ENCODE measurements at regions of chr1 and their contacts with region 1.

Region 1: GRCh38 chr1:28329395-28330153 is 734 bp downstream of the MED18 start:
- DNase-seq: peak; percentile 54
- H3K4me3 Mint-ChIP-seq: peak overlapping the region; percentile 94
- H3K27ac Mint-ChIP-seq: peak overlapping the region; percentile 98
- H3K4me1 Mint-ChIP-seq: peaks cover 38% of the 10 kb centered on the region
- H3K27me3 Mint-ChIP-seq: no peaks in the 10 kb centered on the region

Region 2: GRCh38 chr1:28199328-28200233 is 130.0 kb before region 1 on chr1:
- CTCF ChIA-PET with region 1: no interaction called
- intact Hi-C with region 1: loop called (anchors 1 kb)
- DNase-seq: peak; percentile 75
- H3K4me3 Mint-ChIP-seq: peak overlapping the region; percentile 31
- H3K27ac Mint-ChIP-seq: peak overlapping the region; percentile 90
- H3K4me1 Mint-ChIP-seq: peaks cover 42% of the 10 kb centered on the region
- H3K27me3 Mint-ChIP-seq: no peaks in the 10 kb centered on the region

Region 3: DNA sequence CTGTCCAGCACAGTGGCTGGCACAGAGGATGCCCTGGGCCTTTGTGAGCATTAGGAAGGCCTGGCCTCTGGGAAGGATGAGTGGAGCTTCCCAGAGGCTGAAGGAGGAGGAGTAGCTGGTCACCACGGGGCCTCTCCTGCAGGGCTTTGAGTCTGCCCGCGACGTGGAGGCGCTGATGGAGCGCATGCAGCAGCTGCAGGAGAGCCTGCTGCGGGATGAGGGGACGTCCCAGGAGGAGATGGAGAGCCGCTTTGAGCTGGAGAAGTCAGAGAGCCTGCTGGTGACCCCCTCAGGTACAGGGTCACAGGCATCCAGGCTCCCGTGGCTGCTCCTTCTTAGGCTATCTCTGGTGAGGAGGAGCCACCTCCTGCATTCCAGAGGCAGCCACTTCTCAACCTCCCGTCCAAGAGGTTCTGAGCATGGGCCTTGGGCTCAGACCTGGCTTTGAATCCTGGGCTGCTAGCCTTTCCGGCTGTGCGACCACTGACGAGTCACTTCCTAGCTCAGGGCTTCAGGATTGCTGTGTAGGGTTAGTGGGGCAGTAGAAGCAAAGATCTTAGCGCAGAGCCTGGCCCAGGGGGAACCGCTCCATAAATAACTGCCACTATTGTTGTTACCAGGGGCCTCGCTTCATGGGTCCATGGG is 56.2 kb before region 1 on chr1:
- CTCF ChIA-PET with region 1: no interaction called
- intact Hi-C with region 1: no loop called
- DNase-seq: no peak
- H3K4me3 Mint-ChIP-seq: no peak overlapping the region
- H3K27ac Mint-ChIP-seq: no peak overlapping the region
- H3K4me1 Mint-ChIP-seq: no peaks in the 10 kb centered on the region
- H3K27me3 Mint-ChIP-seq: no peaks in the 10 kb centered on the region

Region 4: GRCh38 chr1:28359592-28360239 is 30.1 kb after region 1 on chr1:
- CTCF ChIA-PET with region 1: interaction called, 10 read pairs
- intact Hi-C with region 1: no loop called
- DNase-seq: peak; percentile 90
- H3K4me3 Mint-ChIP-seq: no peak overlapping the region
- H3K27ac Mint-ChIP-seq: no peak overlapping the region
- H3K4me1 Mint-ChIP-seq: peaks cover 2% of the 10 kb centered on the region
- H3K27me3 Mint-ChIP-seq: no peaks in the 10 kb centered on the region

Region 5: GRCh38 chr1:28552758-28553663 is 223.4 kb after region 1 on chr1 and contains the start of gene TRNAU1AP:
- CTCF ChIA-PET with region 1: no interaction called
- intact Hi-C with region 1: loop called (anchors 1 kb)
- DNase-seq: peak; percentile 99
- H3K4me3 Mint-ChIP-seq: peak within 1 kb of the TSS; percentile 94
- H3K27ac Mint-ChIP-seq: peak within 1 kb of the TSS; percentile 97
- H3K4me1 Mint-ChIP-seq: peaks cover 19% of the 10 kb centered on the region
- H3K27me3 Mint-ChIP-seq: no peaks in the 10 kb centered on the region
- total RNA-seq, gene TRNAU1AP: 36.7 to 39.4 TPM

Region 6: GRCh38 chr1:28642847-28643635 is 313.5 kb after region 1 on chr1 and contains the start of gene TAF12:
- CTCF ChIA-PET with region 1: no interaction called
- intact Hi-C with region 1: loop called (anchors 2 kb)
- DNase-seq: peak; percentile 93
- H3K4me3 Mint-ChIP-seq: peak within 1 kb of the TSS; percentile 96
- H3K27ac Mint-ChIP-seq: peak within 1 kb of the TSS; percentile 94
- H3K4me1 Mint-ChIP-seq: peaks cover 44% of the 10 kb centered on the region
- H3K27me3 Mint-ChIP-seq: no peaks in the 10 kb centered on the region
- total RNA-seq, gene TAF12: 22.5 to 23.5 TPM

Region 7: GRCh38 chr1:29305943-29306342 is 976.4 kb after region 1 on chr1:
- CTCF ChIA-PET with region 1: no interaction called
- intact Hi-C with region 1: no loop called
- DNase-seq: no peak
- H3K4me3 Mint-ChIP-seq: no peak overlapping the region
- H3K27ac Mint-ChIP-seq: no peak overlapping the region
- H3K4me1 Mint-ChIP-seq: no peaks in the 10 kb centered on the region
- H3K27me3 Mint-ChIP-seq: no peaks in the 10 kb centered on the region